WTC11 (cell line): ENCODE measurements at regions of chr3 and their contacts with region 1.

Region 1: DNA sequence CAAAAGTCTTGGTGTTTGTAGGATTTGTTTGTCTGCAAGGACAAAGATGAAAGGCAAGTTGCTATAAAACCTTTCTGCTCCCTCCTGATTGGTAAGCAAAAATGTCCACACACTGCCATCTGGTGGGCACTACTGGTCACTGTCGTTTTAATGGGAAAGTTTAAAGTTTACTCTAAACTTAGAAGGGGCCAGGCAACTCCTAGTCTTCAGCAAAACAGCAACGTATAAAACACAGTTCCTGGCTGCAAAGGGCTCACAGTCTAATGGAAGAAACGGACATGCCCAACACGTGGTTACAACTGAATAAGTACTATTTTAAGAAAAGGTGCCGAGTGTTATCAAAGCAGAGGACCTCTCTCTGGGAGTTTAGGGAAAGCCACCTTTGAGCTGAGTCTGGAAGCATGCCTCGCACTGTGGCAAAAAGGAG is 23.7 kb upstream of the TPRG1 start:
- DNase-seq: peak; percentile 69
- ATAC-seq: peak; percentile 88
- H3K4me3 Mint-ChIP-seq: no peak overlapping the region
- H3K27ac Mint-ChIP-seq: peak overlapping the region; percentile 5; the same call in 1 of the 2 replicates
- H3K4me1 Mint-ChIP-seq: peaks cover 14% of the 10 kb centered on the region; the same call in 1 of the 2 replicates
- H3K27me3 Mint-ChIP-seq: no peaks in the 10 kb centered on the region
- CTCF ChIP-seq: peak; percentile 57

Region 2: DNA sequence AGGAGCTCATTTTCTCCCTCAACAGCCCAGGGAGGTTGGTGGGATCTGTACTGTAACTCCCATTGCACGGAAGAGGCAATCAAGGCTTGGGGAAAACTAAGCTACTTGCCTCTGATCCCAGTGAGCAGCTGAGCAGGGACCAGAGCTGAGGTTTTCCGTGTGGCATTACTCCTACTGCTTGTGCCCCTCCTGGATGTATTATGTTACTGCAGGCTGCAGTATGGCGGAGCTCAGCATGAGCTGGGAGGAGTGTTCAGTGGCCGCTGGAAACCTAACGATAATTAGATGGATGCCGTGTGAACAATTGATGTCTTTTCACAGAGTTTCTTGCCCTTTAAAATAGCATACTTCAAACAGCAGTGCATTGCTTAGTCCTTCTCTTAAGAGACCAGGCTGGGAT is 21.6 kb after region 1 on chr3:
- CTCF ChIA-PET with region 1: interaction called, 15 read pairs
- POLR2A ChIA-PET with region 1: no interaction called
- DNase-seq: peak; percentile 36
- ATAC-seq: peak; percentile 97
- H3K4me3 Mint-ChIP-seq: no peak overlapping the region
- H3K27ac Mint-ChIP-seq: no peak overlapping the region
- H3K4me1 Mint-ChIP-seq: peaks cover 15% of the 10 kb centered on the region
- H3K27me3 Mint-ChIP-seq: no peaks in the 10 kb centered on the region
- CTCF ChIP-seq: peak; percentile 57

Region 3: GRCh38 chr3:189212706-189213105 is 64.6 kb after region 1 on chr3:
- CTCF ChIA-PET with region 1: no interaction called
- POLR2A ChIA-PET with region 1: no interaction called
- DNase-seq: no peak
- ATAC-seq: no peak
- H3K4me3 Mint-ChIP-seq: no peak overlapping the region
- H3K27ac Mint-ChIP-seq: no peak overlapping the region
- H3K4me1 Mint-ChIP-seq: 0 out of 2 replicates have a peak, but pooled peaks cover 2% of the 10 kb centered on the region
- H3K27me3 Mint-ChIP-seq: no peaks in the 10 kb centered on the region
- CTCF ChIP-seq: no peak

Region 4: DNA sequence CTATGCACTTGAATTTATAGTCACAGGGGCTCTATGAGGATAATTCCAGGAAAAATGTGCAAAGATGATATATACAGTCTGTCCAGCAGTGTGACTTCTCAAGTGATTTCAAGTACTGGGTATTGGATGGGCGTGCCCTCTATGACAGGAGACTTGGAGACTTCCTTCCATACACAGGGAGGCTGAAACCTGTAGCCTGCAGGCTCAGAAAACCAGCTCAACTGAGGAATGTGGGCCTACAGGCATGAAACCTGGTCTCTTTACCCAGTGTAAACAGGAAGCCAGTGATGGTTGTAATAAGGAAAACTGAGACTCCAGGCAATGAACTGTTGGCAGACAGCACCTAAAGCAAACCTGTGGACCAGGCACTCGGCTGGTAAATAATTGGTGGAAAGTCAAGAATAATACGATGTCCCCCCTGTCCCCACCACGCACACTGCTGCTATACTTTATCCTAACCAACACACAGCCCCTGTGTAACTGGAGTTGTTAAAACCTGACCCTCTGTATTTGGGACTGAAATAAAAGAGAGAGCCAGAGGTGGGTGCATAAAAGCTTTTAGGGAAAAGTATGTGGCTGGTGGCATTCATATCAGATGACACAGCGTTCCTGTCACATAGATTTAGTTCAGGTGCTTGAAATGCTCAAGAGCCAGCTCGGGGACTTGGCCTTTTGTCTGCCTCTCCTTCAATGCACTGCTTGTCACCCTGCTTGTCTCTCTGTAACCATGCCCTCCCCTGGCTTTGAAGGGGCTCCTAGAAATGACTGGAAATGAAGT is 168.3 kb after region 1 on chr3:
- CTCF ChIA-PET with region 1: no interaction called
- POLR2A ChIA-PET with region 1: no interaction called
- DNase-seq: peak; percentile 12
- ATAC-seq: peak; percentile 95
- H3K4me3 Mint-ChIP-seq: no peak overlapping the region
- H3K27ac Mint-ChIP-seq: peak overlapping the region; percentile 48
- H3K4me1 Mint-ChIP-seq: peaks cover 25% of the 10 kb centered on the region
- H3K27me3 Mint-ChIP-seq: no peaks in the 10 kb centered on the region
- CTCF ChIP-seq: no peak

Region 5: DNA sequence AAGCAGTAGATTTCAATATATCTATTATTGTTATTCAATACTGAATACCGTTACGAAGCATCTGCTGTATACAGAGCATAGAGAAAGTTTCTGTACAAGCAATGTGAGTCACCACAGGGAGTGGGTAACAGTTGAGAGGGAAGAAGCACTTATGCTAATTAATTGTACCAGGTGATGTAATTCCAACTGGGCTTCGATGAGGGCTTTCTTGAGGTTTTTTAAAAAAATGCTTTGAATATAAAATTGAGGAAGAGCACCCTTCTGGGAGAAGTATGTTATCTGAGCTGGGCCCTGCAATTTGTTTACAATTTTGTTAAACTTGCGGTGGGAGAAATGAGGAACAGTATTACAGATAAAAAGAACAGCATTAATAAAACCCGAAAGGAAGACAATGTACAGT is 221.5 kb after region 1 on chr3:
- CTCF ChIA-PET with region 1: no interaction called
- POLR2A ChIA-PET with region 1: no interaction called
- DNase-seq: no peak
- ATAC-seq: no peak; the same call in 1 of the 2 replicates
- H3K4me3 Mint-ChIP-seq: no peak overlapping the region
- H3K27ac Mint-ChIP-seq: no peak overlapping the region
- H3K4me1 Mint-ChIP-seq: peaks cover 30% of the 10 kb centered on the region
- H3K27me3 Mint-ChIP-seq: no peaks in the 10 kb centered on the region
- CTCF ChIP-seq: no peak